Breast epithelium (tissue), 4 donors: ENCODE measurements at regions of chr10 and their contacts with region 1.

Region 1: DNA sequence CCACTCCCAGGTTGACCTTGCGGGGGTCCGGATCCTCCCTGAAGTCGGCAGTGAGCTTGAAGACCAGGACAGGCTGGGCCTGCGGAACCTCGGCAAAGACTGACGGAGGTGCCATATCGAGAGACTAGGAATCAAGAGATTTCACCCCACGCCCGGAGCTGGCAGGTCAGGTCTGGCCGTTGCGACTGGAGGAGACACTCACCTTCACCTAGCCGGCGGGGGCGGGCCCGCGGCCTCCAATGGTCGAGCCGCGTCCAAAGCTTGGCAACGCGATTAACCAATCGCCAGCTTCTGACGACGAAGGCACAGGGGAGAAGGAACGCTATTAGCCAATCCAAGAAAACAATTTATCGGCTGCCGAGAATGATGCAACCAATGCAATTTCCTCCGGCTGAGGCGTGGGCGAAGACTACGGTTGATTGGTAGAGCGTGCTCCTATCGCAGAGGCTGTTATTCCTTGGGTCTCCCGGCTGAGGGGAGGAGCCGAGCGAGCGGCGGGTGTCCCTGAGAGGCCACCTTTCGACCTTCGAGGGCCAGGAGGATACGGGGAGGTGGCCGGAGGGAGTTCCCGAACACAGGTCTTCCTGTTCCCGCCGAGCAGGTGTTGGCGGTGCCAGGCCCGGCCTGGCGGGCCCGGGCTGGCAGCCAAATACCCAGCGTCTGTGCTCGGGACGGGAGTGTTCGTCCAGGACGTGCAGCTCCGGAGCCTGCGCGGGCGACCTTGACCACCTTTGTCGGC is at the start of gene GOT1:
- DNase-seq: peak; percentile 93 to 99
- H3K4me3 ChIP-seq: peak within 1 kb of the TSS; percentile 65 to 88 (median 66)
- H3K27ac ChIP-seq: peak within 1 kb of the TSS; percentile 87 to 95
- H3K4me1 ChIP-seq: peaks cover 0 to 6% of the 10 kb centered on the region in 2 donors
- H3K27me3 ChIP-seq: no peaks in the 10 kb centered on the region
- CTCF ChIP-seq: peak in 1 of 3 donors; percentile 21
- POLR2A ChIP-seq: peak; percentile 89
- total RNA-seq, gene GOT1: 13.9 to 18.4 (median 15.7) TPM

Region 2: DNA sequence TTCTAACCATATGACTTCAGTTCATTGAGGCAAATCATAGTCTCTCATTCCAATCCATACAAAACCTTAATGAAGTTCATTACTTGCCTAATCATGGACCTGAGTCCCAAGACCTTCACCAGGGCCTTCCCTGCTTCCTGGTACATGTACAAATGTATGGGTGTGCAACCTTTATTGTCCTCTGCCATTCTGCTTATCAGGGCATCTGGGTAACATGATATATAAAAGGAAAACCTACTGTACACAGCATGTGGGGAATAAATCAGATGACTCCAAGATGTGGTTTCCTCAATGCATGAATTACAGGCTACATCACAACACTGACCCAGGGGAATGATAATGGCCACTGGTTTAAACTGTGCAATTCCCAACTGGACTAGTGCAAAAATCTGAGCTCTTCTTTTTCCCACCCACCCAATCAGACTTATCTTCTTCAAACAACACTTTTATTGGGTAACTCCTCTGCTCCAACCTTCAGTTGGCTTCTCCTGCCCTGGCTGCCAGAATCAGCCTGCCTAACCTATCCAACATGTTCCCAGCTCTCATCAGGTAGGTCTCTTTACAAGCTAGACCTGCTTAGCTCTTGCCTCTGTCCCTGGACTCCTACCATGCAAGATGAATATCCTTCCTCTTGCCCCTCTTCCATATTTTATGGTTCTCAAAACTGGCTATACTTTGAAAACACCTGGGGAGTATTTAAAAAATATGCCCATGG is 11.6 kb before region 1 on chr10:
- intact Hi-C with region 1: no loop called
- DNase-seq: no peak
- H3K4me3 ChIP-seq: no peak overlapping the region
- H3K27ac ChIP-seq: no peak overlapping the region
- H3K4me1 ChIP-seq: no peaks in the 10 kb centered on the region
- H3K27me3 ChIP-seq: no peaks in the 10 kb centered on the region
- CTCF ChIP-seq: no peak
- POLR2A ChIP-seq: no peak

Region 3: GRCh38 chr10:99612167-99612831 is 181.7 kb after region 1 on chr10:
- intact Hi-C with region 1: loop called (anchors 5 kb)
- DNase-seq: no peak
- H3K4me3 ChIP-seq: no peak overlapping the region
- H3K27ac ChIP-seq: no peak overlapping the region
- H3K4me1 ChIP-seq: peaks cover 0 to 8% of the 10 kb centered on the region in 2 donors
- H3K27me3 ChIP-seq: no peaks in the 10 kb centered on the region
- CTCF ChIP-seq: peak; percentile 58 to 79 (median 76)
- POLR2A ChIP-seq: no peak